CD8-positive, alpha-beta memory T cell (primary cell): ENCODE measurements at regions of chr5 and their contacts with region 1.

Region 1: GRCh38 chr5:81105261-81105877 is 127.8 kb upstream of the CKMT2 start:
- DNase-seq: no peak
- H3K4me3 ChIP-seq: no peak overlapping the region
- H3K4me3 Mint-ChIP-seq: peak overlapping the region in 5 of 7 donors; percentile 2 to 54 (median 45)
- H3K27ac ChIP-seq: no peak overlapping the region
- H3K27ac Mint-ChIP-seq: peak overlapping the region in 7 of 8 donors; percentile 21 to 83 (median 61)
- H3K4me1 ChIP-seq: peaks cover 13% of the 10 kb centered on the region
- H3K4me1 Mint-ChIP-seq: peaks cover 16 to 32% (median 25%) of the 10 kb centered on the region in 3 donors
- H3K27me3 ChIP-seq: no peaks in the 10 kb centered on the region
- H3K27me3 Mint-ChIP-seq: no peaks in the 10 kb centered on the region

Region 2: GRCh38 chr5:80686757-80687156 is 418.6 kb before region 1 on chr5:
- CTCF ChIA-PET with region 1: interaction called, 19 read pairs
- POLR2A ChIA-PET with region 1: no interaction called
- DNase-seq: peak in 2 of 5 donors; percentile 25 to 29
- H3K4me3 ChIP-seq: no peak overlapping the region
- H3K4me3 Mint-ChIP-seq: no peak overlapping the region
- H3K27ac ChIP-seq: no peak overlapping the region
- H3K27ac Mint-ChIP-seq: no peak overlapping the region
- H3K4me1 ChIP-seq: no peaks in the 10 kb centered on the region
- H3K4me1 Mint-ChIP-seq: peaks cover 15 to 58% (median 28%) of the 10 kb centered on the region in 3 donors
- H3K27me3 ChIP-seq: no peaks in the 10 kb centered on the region
- H3K27me3 Mint-ChIP-seq: no peaks in the 10 kb centered on the region

Region 3: GRCh38 chr5:80935811-80936385 is 169.5 kb before region 1 on chr5:
- CTCF ChIA-PET with region 1: interaction called, 19 read pairs
- POLR2A ChIA-PET with region 1: no interaction called
- DNase-seq: no peak
- H3K4me3 ChIP-seq: no peak overlapping the region
- H3K4me3 Mint-ChIP-seq: no peak overlapping the region
- H3K27ac ChIP-seq: no peak overlapping the region
- H3K27ac Mint-ChIP-seq: no peak overlapping the region
- H3K4me1 ChIP-seq: no peaks in the 10 kb centered on the region
- H3K4me1 Mint-ChIP-seq: peaks cover 4 to 6% (median 5%) of the 10 kb centered on the region in 3 donors
- H3K27me3 ChIP-seq: no peaks in the 10 kb centered on the region
- H3K27me3 Mint-ChIP-seq: peaks cover 2 to 5% of the 10 kb centered on the region in 2 donors

Region 4: GRCh38 chr5:80960531-80961375 is 144.6 kb before region 1 on chr5:
- CTCF ChIA-PET with region 1: interaction called, 19 read pairs
- POLR2A ChIA-PET with region 1: interaction called, 3 read pairs
- DNase-seq: peak; percentile 13 to 64 (median 39)
- H3K4me3 ChIP-seq: peak overlapping the region; percentile 62
- H3K4me3 Mint-ChIP-seq: peak overlapping the region; percentile 85 to 99 (median 95)
- H3K27ac ChIP-seq: no peak overlapping the region
- H3K27ac Mint-ChIP-seq: peak overlapping the region; percentile 25 to 93 (median 87)
- H3K4me1 ChIP-seq: peaks cover 54% of the 10 kb centered on the region
- H3K4me1 Mint-ChIP-seq: peaks cover 48 to 71% (median 68%) of the 10 kb centered on the region in 3 donors
- H3K27me3 ChIP-seq: no peaks in the 10 kb centered on the region
- H3K27me3 Mint-ChIP-seq: peaks cover 4 to 5% of the 10 kb centered on the region in 2 donors

Region 5: DNA sequence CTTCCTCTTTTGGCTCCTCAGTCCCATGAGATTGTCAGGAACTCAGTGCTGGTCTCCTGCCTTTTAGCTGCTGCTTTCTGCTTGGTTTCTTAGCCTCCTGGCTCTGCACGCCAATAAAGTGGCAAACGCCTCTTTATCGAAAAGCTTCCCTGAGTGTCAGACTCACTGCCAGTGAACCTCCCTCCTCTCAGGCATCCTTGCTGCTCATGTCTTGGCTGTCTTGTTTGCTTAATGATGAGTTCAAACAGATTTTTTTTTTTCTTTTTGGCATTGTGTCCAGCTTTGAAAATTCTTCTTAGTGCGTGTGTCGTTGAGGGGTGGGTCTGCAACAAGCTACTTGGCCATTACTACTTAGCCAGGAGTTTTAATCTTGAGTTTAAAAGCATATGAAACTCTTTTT is 130.3 kb before region 1 on chr5:
- CTCF ChIA-PET with region 1: interaction called, 11 read pairs
- POLR2A ChIA-PET with region 1: no interaction called
- DNase-seq: no peak
- H3K4me3 ChIP-seq: no peak overlapping the region
- H3K4me3 Mint-ChIP-seq: no peak overlapping the region
- H3K27ac ChIP-seq: no peak overlapping the region
- H3K27ac Mint-ChIP-seq: peak overlapping the region in 5 of 8 donors; percentile 0 to 82 (median 37)
- H3K4me1 ChIP-seq: peaks cover 44% of the 10 kb centered on the region
- H3K4me1 Mint-ChIP-seq: peaks cover 57 to 88% (median 63%) of the 10 kb centered on the region in 3 donors
- H3K27me3 ChIP-seq: no peaks in the 10 kb centered on the region
- H3K27me3 Mint-ChIP-seq: no peaks in the 10 kb centered on the region

Region 6: GRCh38 chr5:81151546-81151945 is 46.2 kb after region 1 on chr5:
- CTCF ChIA-PET with region 1: no interaction called
- POLR2A ChIA-PET with region 1: no interaction called
- DNase-seq: no peak
- H3K4me3 ChIP-seq: no peak overlapping the region
- H3K4me3 Mint-ChIP-seq: no peak overlapping the region
- H3K27ac ChIP-seq: no peak overlapping the region
- H3K27ac Mint-ChIP-seq: peak overlapping the region in 2 of 8 donors; percentile 55 to 58
- H3K4me1 ChIP-seq: no peaks in the 10 kb centered on the region
- H3K4me1 Mint-ChIP-seq: peaks cover 10 to 14% (median 13%) of the 10 kb centered on the region in 3 donors
- H3K27me3 ChIP-seq: no peaks in the 10 kb centered on the region
- H3K27me3 Mint-ChIP-seq: peaks cover 0 to 3% of the 10 kb centered on the region in 2 donors